Sigmoid colon (tissue), 7 donors: ENCODE measurements at regions of chr1 and their contacts with region 1.

Region 1: DNA sequence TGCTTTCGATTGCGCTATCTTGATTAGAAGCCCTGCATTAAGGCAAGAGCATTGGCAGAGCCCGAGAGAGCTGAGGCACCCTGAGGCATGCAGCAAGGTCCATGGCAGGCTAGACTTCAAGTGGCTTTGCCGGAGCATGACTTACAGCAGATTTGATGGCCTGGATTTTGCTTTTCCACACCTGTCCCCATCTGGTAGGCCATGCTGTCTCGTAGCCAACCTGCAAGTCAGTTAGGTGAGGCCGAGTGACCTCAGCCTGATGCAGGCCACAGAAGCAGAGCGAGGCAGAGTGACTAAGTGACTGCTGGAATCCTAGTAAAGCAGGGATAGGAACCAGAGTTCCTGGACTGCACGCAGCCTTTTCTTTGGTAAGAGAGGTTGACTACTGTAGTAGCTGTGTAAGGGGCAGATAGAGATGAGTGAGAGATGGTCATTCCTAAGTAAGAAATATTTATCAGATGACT is 148.9 kb downstream of the PBX1 start:
- DNase-seq: peak; percentile 79
- H3K4me3 ChIP-seq: peak overlapping the region in 1 of 4 donors; percentile 0
- H3K27ac ChIP-seq: peak overlapping the region; percentile 77 to 87 (median 80)
- H3K4me1 ChIP-seq: peaks cover 0 to 96% (median 88%) of the 10 kb centered on the region in 4 donors
- H3K27me3 ChIP-seq: no peaks in the 10 kb centered on the region
- CTCF ChIP-seq: no peak
- EP300 ChIP-seq: no peak
- POLR2A ChIP-seq: no peak

Region 2: GRCh38 chr1:164576291-164577271 is 131.3 kb before region 1 on chr1:
- intact Hi-C with region 1: loop called (anchors 5 kb)
- DNase-seq: peak; percentile 74
- H3K4me3 ChIP-seq: peak overlapping the region; percentile 21 to 46 (median 40)
- H3K27ac ChIP-seq: peak overlapping the region; percentile 77 to 91 (median 88)
- H3K4me1 ChIP-seq: peaks cover 0 to 81% (median 80%) of the 10 kb centered on the region in 4 donors
- H3K27me3 ChIP-seq: no peaks in the 10 kb centered on the region
- CTCF ChIP-seq: no peak
- EP300 ChIP-seq: no peak
- POLR2A ChIP-seq: no peak

Region 3: GRCh38 chr1:164754088-164754600 is 46.2 kb after region 1 on chr1:
- intact Hi-C with region 1: loop called (anchors 5 kb)
- DNase-seq: peak; percentile 90
- H3K4me3 ChIP-seq: peak overlapping the region; percentile 5 to 33 (median 26)
- H3K27ac ChIP-seq: peak overlapping the region; percentile 80 to 88 (median 88)
- H3K4me1 ChIP-seq: peaks cover 0 to 82% (median 69%) of the 10 kb centered on the region in 4 donors
- H3K27me3 ChIP-seq: no peaks in the 10 kb centered on the region
- CTCF ChIP-seq: no peak
- EP300 ChIP-seq: peak; percentile 46 to 85 (median 68)
- POLR2A ChIP-seq: no peak

Region 4: DNA sequence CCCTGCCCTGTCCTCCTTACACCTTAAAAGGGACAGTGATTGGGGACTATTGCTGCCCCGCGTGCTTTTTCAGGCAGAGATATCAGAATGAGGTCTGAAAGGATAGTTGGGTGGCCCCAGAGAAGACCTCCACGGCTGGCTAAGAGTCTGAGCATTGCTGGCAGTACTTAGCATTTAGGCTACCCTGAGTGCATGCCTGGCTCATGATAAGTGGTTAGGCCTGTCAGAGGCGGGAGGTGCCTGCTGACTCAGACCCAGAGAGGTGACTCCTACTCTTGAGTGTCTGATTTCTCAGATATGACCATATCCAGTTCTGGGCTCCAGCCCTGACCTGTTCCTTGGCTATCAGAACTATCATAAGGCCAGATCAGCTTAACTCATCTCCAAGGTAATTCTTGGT is 64.7 kb after region 1 on chr1:
- intact Hi-C with region 1: loop called (anchors 5 kb)
- DNase-seq: peak; percentile 88
- H3K4me3 ChIP-seq: no peak overlapping the region
- H3K27ac ChIP-seq: peak overlapping the region; percentile 72 to 87 (median 80)
- H3K4me1 ChIP-seq: peaks cover 0 to 82% (median 76%) of the 10 kb centered on the region in 4 donors
- H3K27me3 ChIP-seq: no peaks in the 10 kb centered on the region
- CTCF ChIP-seq: no peak
- EP300 ChIP-seq: peak in 1 of 4 donors; percentile 6
- POLR2A ChIP-seq: no peak

Region 5: GRCh38 chr1:164823486-164824279 is 115.8 kb after region 1 on chr1:
- intact Hi-C with region 1: loop called (anchors 5 kb)
- DNase-seq: peak; percentile 89
- H3K4me3 ChIP-seq: no peak overlapping the region
- H3K27ac ChIP-seq: peak overlapping the region; percentile 69 to 85 (median 80)
- H3K4me1 ChIP-seq: peaks cover 0 to 58% (median 56%) of the 10 kb centered on the region in 4 donors
- H3K27me3 ChIP-seq: no peaks in the 10 kb centered on the region
- CTCF ChIP-seq: peak in 3 of 4 experiments; percentile 10 to 34 (median 14)
- EP300 ChIP-seq: peak; percentile 72 to 93 (median 89)
- POLR2A ChIP-seq: no peak